Heart left ventricle (tissue), 16 donors: ENCODE measurements at regions of chr2 and their contacts with region 1.

Region 1: DNA sequence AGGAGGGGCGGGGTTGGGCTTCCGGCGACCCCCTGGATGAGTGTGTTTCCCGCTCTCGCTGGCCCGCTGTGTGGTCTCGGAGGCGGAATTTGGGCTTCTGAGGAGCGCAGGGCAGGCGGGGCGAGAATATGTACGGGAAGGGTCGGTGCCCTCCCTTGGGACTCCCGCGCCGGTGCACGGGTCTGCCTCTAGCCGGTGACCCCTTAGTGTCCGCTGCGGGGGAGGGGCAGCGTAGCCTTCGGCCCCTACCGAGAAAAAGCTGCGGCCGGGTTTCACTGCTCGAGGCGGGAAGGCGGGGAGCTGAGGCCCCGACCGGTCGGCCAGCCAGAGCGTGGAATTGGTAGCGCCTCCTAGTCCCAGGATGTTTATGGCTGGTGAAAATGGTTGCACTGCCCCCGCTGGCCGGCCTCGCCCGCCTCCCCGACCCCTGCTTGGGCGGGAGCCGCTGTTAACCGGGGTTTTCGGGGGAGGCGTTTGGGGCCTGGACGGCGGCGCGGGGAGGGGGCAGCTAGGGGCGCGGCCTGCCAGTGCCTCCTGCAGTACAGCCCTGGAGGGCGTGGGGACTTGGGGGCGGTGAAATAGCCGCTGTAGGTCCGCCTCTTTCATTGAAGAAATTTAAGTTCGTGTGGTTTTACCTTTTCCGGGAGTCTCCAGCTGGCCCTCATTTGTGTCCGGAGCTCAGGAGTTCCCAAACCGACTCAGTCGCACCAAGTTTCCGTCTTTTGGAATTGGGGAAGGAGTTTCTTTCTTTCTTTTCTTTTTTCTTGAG is at the start of gene UGP2:
- DNase-seq: peak; percentile 91 to 96 (median 94)
- ATAC-seq: peak; percentile 81 to 90 (median 88)
- H3K4me3 ChIP-seq: peak within 1 kb of the TSS; percentile 74 to 98 (median 89)
- H3K27ac ChIP-seq: peak within 1 kb of the TSS; percentile 98 to 100 (median 99)
- H3K4me1 ChIP-seq: peaks cover 0 to 45% (median 30%) of the 10 kb centered on the region in 12 donors
- H3K27me3 ChIP-seq: no peaks in the 10 kb centered on the region
- CTCF ChIP-seq: peak in 10 of 12 donors; percentile 7 to 68 (median 24)
- POLR2A ChIP-seq: peak in 1 of 2 donors; percentile 77
- total RNA-seq, gene UGP2: 175 to 972 (median 331) TPM

Region 2: GRCh38 chr2:63588385-63589147 is 252.9 kb before region 1 on chr2 and contains the starts of genes MDH1 and WDPCP:
- intact Hi-C with region 1: loop called in 5 of 10 experiments (anchors 2 to 10 kb)
- DNase-seq: peak; percentile 93 to 97 (median 95)
- ATAC-seq: peak; percentile 93 to 95 (median 93)
- H3K4me3 ChIP-seq: peak within 1 kb of the TSS; percentile 50 to 93 (median 82)
- H3K27ac ChIP-seq: peak within 1 kb of the TSS; percentile 82 to 98 (median 94)
- H3K4me1 ChIP-seq: peaks cover 0 to 49% (median 32%) of the 10 kb centered on the region in 12 donors
- H3K27me3 ChIP-seq: no peaks in the 10 kb centered on the region
- CTCF ChIP-seq: no peak
- POLR2A ChIP-seq: peak; percentile 75 to 87
- total RNA-seq, gene MDH1: 862 to 1,901 (median 1,395) TPM
- total RNA-seq, gene WDPCP: 13.9 to 32.2 (median 16.6) TPM

Region 3: DNA sequence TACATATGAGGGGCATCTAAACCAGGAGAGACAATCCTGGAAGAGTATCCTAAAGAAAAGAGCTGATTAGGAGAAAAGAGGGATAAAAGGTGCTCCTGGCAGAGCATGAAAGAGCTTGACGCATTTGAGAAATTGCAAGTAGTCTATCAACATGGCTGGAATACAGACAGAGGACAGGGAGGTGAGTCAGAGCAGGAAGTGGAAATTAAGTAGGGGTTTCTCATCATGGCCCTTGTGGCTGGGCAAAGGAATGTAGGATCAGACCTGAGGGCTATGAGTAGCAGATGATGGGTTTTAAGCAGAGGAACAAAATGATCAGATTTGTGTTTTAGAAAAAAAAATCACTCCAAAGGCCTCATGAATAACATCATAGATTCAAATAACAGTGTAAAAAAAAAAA is 48.9 kb before region 1 on chr2:
- intact Hi-C with region 1: no loop called
- DNase-seq: no peak
- ATAC-seq: no peak
- H3K4me3 ChIP-seq: no peak overlapping the region
- H3K27ac ChIP-seq: no peak overlapping the region
- H3K4me1 ChIP-seq: peaks cover 0 to 26% (median 3%) of the 10 kb centered on the region in 12 donors
- H3K27me3 ChIP-seq: no peaks in the 10 kb centered on the region
- CTCF ChIP-seq: no peak
- POLR2A ChIP-seq: no peak

Region 4: DNA sequence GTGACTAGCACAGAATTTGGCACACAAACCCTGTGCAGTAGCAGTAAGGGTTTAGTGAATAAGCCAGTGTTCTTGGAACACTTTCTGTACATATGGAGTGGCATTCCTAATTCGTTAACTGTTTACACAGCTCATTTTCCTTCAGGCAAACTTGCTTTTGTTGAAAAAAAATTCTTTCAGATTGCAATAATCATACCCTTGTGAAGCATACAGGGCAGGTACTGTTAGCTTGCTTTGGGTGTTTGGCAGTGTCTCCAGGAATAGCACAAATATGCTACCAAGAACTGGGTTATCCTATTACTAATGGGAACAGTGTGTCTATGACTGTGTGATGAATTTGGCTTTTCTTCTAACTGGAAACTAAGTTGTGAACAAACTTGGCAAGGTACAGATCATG is 33.7 kb after region 1 on chr2:
- intact Hi-C with region 1: loop called in 2 of 10 experiments (anchors 5 kb)
- DNase-seq: no peak
- ATAC-seq: peak; percentile 54 to 67 (median 60)
- H3K4me3 ChIP-seq: no peak overlapping the region
- H3K27ac ChIP-seq: peak overlapping the region in 8 of 12 donors; percentile 13 to 71 (median 41)
- H3K4me1 ChIP-seq: peaks cover 0 to 61% (median 33%) of the 10 kb centered on the region in 12 donors
- H3K27me3 ChIP-seq: no peaks in the 10 kb centered on the region
- CTCF ChIP-seq: no peak
- POLR2A ChIP-seq: no peak

Region 5: DNA sequence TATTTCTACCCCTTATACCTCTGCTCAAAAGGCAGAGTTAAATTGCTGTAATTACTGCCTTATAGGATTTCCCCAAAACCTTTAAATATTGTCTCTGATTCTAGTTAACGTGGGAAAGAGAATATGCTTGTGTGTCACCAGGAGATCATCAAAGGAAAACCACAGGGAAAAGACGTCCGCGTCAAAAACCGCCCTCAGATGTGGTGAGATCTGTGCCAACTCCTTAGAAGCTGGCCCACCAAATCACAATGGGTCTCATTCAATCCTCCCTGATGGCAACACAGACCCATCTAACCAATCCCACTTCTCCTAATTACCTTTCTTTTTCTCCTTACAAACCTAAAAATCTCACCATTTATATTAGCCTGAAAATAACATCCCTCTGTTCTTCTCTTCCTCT is 152.4 kb after region 1 on chr2:
- intact Hi-C with region 1: no loop called
- DNase-seq: no peak
- ATAC-seq: no peak
- H3K4me3 ChIP-seq: no peak overlapping the region
- H3K27ac ChIP-seq: no peak overlapping the region
- H3K4me1 ChIP-seq: no peaks in the 10 kb centered on the region
- H3K27me3 ChIP-seq: no peaks in the 10 kb centered on the region
- CTCF ChIP-seq: no peak
- POLR2A ChIP-seq: no peak